ENCODE measurements at regions of chr20 and their contacts with region 1.

Region 1: GRCh38 chr20:3051385-3052019 is 5.7 kb downstream of the MRPS26 start:
- DNase-seq: peak; percentile 28
- ATAC-seq: peak; percentile 37
- H3K4me3 Mint-ChIP-seq: no peak overlapping the region
- H3K27ac Mint-ChIP-seq: peak overlapping the region; percentile 51
- H3K4me1 Mint-ChIP-seq: peaks cover 22% of the 10 kb centered on the region
- H3K27me3 Mint-ChIP-seq: no peaks in the 10 kb centered on the region

Region 2: GRCh38 chr20:3037654-3038053 is 13.8 kb before region 1 on chr20:
- CTCF ChIA-PET with region 1: interaction called, 12 read pairs
- POLR2A ChIA-PET with region 1: interaction called, 3 read pairs
- intact Hi-C with region 1: no loop called
- DNase-seq: no peak
- ATAC-seq: no peak
- H3K4me3 Mint-ChIP-seq: no peak overlapping the region
- H3K27ac Mint-ChIP-seq: peak overlapping the region; percentile 17
- H3K4me1 Mint-ChIP-seq: no peaks in the 10 kb centered on the region
- H3K27me3 Mint-ChIP-seq: no peaks in the 10 kb centered on the region

Region 3: DNA sequence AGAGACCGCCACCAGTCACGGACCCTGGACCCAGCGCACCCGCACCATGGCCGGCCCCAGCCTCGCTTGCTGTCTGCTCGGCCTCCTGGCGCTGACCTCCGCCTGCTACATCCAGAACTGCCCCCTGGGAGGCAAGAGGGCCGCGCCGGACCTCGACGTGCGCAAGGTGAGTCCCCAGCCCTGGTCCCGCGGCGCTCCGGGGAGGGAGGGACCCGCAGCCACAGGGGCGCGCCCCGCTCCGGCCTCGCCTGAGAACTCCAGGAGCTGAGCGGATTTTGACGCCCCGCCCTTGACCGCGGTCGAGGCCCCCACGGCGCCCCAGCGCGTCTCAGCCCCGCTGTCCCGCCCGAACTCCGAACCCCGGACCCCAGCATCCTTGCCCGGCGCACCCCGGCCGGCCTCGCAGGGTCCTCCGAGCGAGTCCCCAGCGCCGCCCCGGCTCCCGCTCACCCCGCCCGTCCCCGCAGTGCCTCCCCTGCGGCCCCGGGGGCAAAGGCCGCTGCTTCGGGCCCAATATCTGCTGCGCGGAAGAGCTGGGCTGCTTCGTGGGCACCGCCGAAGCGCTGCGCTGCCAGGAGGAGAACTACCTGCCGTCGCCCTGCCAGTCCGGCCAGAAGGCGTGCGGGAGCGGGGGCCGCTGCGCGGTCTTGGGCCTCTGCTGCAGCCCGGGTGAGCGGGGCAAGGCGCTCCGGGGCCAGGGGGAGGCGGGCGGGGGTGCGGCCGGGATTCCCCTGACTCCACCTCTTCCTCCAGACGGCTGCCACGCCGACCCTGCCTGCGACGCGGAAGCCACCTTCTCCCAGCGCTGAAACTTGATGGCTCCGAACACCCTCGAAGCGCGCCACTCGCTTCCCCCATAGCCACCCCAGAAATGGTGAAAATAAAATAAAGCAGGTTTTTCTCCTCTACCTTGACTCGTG is 20.4 kb after region 1 on chr20 and contains the start of gene OXT:
- CTCF ChIA-PET with region 1: interaction called, 10 read pairs
- POLR2A ChIA-PET with region 1: no interaction called
- intact Hi-C with region 1: loop called (anchors 1 to 2 kb)
- DNase-seq: peak; percentile 83
- ATAC-seq: peak; percentile 74
- H3K4me3 Mint-ChIP-seq: peak within 1 kb of the TSS; percentile 61
- H3K27ac Mint-ChIP-seq: peak within 1 kb of the TSS; percentile 87
- H3K4me1 Mint-ChIP-seq: peaks cover 27% of the 10 kb centered on the region
- H3K27me3 Mint-ChIP-seq: no peaks in the 10 kb centered on the region
- total RNA-seq, gene OXT: 0.40 TPM in 1 of 2 experiments, not detected in the other

Region 4: DNA sequence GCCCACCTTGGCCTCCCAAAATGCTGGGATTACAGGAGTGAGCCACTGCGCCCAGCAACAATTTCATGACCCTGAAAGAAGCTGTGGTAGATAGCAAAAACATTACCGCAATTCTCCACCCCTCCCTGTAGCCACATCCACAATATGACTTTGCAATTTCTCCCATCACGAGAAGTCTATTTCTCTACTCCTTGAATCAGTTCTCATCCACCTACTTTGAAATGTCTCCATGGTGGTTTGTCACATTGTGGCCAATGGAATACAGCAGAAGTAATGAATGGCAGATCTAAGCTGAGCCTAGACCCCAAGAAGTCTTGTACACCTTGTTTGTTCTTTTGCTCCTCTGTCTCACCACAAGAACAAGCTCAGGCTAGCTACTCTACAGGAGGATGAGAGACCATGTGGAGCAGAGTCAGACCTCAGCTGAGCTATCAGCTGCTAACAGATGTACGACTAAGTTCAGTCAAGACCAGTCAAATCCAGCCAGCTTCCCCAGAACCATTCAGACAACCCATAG is 26.2 kb after region 1 on chr20:
- CTCF ChIA-PET with region 1: interaction called, 16 read pairs
- POLR2A ChIA-PET with region 1: interaction called, 3 read pairs
- intact Hi-C with region 1: loop called (anchors 1 to 2 kb)
- DNase-seq: peak; percentile 35
- ATAC-seq: peak; percentile 47
- H3K4me3 Mint-ChIP-seq: peak overlapping the region; percentile 0
- H3K27ac Mint-ChIP-seq: peak overlapping the region; percentile 55
- H3K4me1 Mint-ChIP-seq: peaks cover 27% of the 10 kb centered on the region
- H3K27me3 Mint-ChIP-seq: peaks cover 26% of the 10 kb centered on the region

Region 5: GRCh38 chr20:3115190-3116107 is 63.9 kb after region 1 on chr20:
- CTCF ChIA-PET with region 1: interaction called, 21 read pairs
- POLR2A ChIA-PET with region 1: no interaction called
- intact Hi-C with region 1: loop called (anchors 1 kb)
- DNase-seq: peak; percentile 32
- ATAC-seq: peak; percentile 52
- H3K4me3 Mint-ChIP-seq: no peak overlapping the region
- H3K27ac Mint-ChIP-seq: no peak overlapping the region
- H3K4me1 Mint-ChIP-seq: peaks cover 13% of the 10 kb centered on the region
- H3K27me3 Mint-ChIP-seq: no peaks in the 10 kb centered on the region

Region 6: DNA sequence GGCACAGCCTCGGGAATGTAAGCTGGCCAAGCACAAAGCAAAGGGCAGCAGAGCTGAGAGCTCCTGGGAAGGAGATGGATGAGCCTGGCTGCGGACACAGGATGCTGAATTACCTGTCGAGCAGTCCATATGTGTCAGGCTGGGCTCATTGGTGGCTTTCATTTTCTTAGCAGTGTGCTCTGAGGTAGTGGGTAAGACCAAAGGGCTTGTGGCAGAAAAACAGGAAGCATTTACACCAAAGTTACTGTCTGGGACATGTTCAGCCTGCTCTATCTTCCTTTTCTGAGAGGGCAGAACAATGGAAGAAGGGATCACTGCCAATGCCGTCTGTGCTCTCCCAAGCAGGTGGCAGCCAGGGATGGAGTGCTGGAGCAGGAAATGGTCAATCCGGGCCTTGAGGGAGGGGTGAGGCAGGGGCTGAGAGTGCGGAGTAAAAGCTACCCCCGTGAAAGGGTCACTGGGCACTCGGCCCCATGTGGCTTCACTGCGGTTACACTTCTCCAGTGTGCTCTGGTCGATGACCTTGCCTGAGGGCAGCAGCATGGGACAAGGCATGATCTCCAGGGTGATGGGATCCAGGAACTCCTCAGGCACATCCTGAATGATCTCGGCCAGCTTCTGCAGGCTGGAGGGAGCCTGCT is 69.9 kb after region 1 on chr20:
- CTCF ChIA-PET with region 1: interaction called, 21 read pairs
- POLR2A ChIA-PET with region 1: no interaction called
- intact Hi-C with region 1: no loop called
- DNase-seq: no peak
- ATAC-seq: no peak
- H3K4me3 Mint-ChIP-seq: no peak overlapping the region
- H3K27ac Mint-ChIP-seq: peak overlapping the region; percentile 30
- H3K4me1 Mint-ChIP-seq: peaks cover 40% of the 10 kb centered on the region
- H3K27me3 Mint-ChIP-seq: no peaks in the 10 kb centered on the region

Region 7: DNA sequence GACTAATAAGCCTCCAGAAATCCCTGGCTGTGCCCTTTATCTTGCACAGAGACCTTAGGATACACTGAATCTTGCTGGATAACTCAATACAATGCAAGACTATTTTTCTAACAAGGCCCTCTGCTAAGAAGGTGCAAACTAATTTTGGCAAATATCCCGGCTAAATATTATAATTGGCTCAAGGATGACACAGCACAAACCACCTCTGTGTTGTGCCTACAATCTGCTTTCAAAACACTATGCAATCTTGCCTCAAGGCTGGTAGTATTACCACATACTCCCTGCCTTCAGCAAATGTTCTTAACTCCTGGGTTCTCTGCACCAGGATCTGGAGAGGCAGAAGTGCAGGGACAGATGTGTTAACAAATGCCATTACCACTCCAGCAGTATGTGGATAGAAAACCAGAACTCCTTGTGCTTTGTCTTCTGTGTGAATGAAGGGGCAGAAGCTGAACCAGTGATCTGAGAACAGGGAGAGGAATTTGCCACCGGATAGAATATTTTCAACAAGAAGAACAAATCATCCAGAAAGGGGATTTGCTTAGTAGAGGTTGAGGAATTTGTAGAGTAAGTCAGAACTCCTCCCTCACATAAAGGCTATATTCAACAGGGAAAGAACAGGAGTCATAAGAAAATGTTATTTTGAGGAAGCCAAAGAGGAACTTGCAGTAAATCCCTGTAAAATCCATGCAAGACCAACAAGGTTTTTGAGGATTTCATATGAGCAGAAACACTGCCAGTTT is 261.6 kb after region 1 on chr20:
- CTCF ChIA-PET with region 1: interaction called, 13 read pairs
- POLR2A ChIA-PET with region 1: interaction called, 3 read pairs
- intact Hi-C with region 1: loop called (anchors 1 kb)
- DNase-seq: no peak
- ATAC-seq: no peak
- H3K4me3 Mint-ChIP-seq: no peak overlapping the region
- H3K27ac Mint-ChIP-seq: no peak overlapping the region
- H3K4me1 Mint-ChIP-seq: no peaks in the 10 kb centered on the region
- H3K27me3 Mint-ChIP-seq: no peaks in the 10 kb centered on the region

Region 8: GRCh38 chr20:3398681-3399252 is 347.3 kb after region 1 on chr20:
- CTCF ChIA-PET with region 1: no interaction called
- POLR2A ChIA-PET with region 1: no interaction called
- intact Hi-C with region 1: no loop called
- DNase-seq: no peak
- ATAC-seq: no peak
- H3K4me3 Mint-ChIP-seq: no peak overlapping the region
- H3K27ac Mint-ChIP-seq: no peak overlapping the region
- H3K4me1 Mint-ChIP-seq: no peaks in the 10 kb centered on the region
- H3K27me3 Mint-ChIP-seq: no peaks in the 10 kb centered on the region

Region 9: DNA sequence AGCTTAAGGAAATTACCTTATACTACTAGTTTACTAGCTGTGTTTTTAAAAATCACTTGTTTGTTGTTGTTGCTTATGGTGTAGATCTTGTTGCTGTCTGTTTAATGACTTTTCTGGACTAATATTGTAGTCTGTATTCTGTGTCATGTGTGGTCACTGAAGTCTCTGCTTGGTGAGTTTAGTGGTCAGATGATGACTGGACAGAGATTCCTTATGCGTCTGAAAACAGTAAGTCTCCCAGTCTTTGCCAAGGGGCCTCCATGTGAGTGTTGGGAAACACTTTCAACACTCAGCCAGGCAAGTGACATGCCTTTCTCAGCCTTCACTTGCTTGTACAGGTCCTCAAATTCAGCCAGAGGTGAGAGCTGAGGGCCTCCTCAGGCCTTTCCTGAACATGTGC is 1220.7 kb after region 1 on chr20:
- CTCF ChIA-PET with region 1: no interaction called
- POLR2A ChIA-PET with region 1: no interaction called
- intact Hi-C with region 1: no loop called
- DNase-seq: no peak
- ATAC-seq: no peak
- H3K4me3 Mint-ChIP-seq: no peak overlapping the region
- H3K27ac Mint-ChIP-seq: no peak overlapping the region
- H3K4me1 Mint-ChIP-seq: no peaks in the 10 kb centered on the region
- H3K27me3 Mint-ChIP-seq: peaks cover 8% of the 10 kb centered on the region